A549 (cell line): ENCODE measurements at regions of chr5 and their contacts with region 1.

Region 1: GRCh38 chr5:172932313-172933017 is 26.8 kb upstream of the RPL26L1 start:
- DNase-seq: peak; percentile 76 to 86
- ATAC-seq: peak; percentile 66 to 81
- H3K4me3 ChIP-seq: no peak overlapping the region
- H3K27ac ChIP-seq: peak overlapping the region; percentile 98 to 100
- H3K4me1 ChIP-seq: peaks cover 47% of the 10 kb centered on the region
- CTCF ChIP-seq: peak; percentile 89
- EP300 ChIP-seq: no peak
- POLR2A ChIP-seq: no peak
- RAD21 ChIP-seq: peak; percentile 92 to 97

Region 2: DNA sequence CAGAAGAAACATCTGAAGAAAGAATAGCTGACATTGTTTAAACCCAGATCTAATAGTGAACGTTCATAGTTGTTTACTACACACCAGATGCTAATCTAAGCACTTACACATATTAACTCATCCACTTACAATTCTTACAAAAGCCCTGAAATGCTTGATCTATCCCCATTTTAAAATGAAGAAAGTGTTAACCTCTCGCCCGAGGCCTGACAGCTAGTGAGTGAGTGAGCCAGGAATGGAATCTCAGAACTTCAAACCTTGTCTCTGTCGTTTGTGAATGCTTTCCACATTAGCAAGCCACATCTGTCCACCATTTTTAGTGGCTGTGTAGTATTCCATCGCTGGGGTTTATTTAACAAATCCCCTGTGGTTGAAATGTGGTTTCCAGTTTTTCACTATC is 316.3 kb before region 1 on chr5:
- CTCF ChIA-PET with region 1: no interaction called
- POLR2A ChIA-PET with region 1: no interaction called
- DNase-seq: no peak
- ATAC-seq: no peak
- H3K4me3 ChIP-seq: no peak overlapping the region
- H3K27ac ChIP-seq: no peak overlapping the region
- H3K4me1 ChIP-seq: no peaks in the 10 kb centered on the region
- CTCF ChIP-seq: no peak
- EP300 ChIP-seq: no peak
- POLR2A ChIP-seq: no peak
- RAD21 ChIP-seq: no peak

Region 3: DNA sequence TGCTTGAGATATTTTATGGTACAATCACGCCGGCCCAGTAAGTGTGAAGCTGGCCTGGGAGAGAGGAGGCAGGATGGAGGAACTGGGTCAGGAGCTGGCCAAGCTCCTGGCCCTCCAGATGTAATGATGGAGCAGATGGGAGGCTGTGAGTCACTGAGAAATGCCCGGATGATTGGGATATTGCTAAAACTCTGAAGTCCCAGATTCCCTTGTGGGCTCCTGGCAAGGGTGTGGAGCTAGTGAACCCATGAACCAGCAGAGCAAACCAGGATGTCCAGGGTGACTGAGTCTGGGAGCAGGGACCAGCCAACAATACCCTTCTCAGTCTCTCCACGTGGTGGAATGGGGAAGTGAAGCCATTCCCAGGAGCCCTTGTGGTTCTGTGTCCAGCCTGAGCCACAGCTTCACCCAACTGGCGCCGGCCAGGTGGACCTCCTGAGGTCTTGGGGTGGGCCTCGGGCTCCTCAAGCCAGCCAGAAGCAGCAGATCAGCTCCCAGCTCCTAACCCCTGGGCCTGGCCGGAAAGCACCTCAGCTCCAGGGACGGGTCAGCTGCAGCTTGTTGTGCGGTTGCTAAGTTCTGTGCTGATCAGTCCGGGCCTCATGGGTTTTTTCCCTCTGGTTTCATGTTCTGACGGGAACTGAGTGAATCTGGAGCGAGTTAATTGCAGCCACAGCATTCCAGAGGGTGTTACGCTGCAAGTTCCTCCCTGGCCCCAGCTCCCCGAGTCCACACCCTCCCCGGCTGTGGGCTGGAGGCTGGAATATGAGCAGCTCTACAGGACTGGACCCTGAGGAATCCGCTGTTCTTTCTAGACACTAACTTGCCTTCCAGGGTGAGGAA is 199.1 kb before region 1 on chr5:
- CTCF ChIA-PET with region 1: interaction called, 14 read pairs
- POLR2A ChIA-PET with region 1: no interaction called
- DNase-seq: no peak
- ATAC-seq: peak; percentile 20 to 61; a peak in 4 of 6 replicates
- H3K4me3 ChIP-seq: no peak overlapping the region
- H3K27ac ChIP-seq: peak overlapping the region; percentile 45 to 78; a peak in 5 of 6 replicates
- H3K4me1 ChIP-seq: peaks cover 30% of the 10 kb centered on the region
- CTCF ChIP-seq: no peak
- EP300 ChIP-seq: no peak
- POLR2A ChIP-seq: no peak
- RAD21 ChIP-seq: no peak

Region 4: DNA sequence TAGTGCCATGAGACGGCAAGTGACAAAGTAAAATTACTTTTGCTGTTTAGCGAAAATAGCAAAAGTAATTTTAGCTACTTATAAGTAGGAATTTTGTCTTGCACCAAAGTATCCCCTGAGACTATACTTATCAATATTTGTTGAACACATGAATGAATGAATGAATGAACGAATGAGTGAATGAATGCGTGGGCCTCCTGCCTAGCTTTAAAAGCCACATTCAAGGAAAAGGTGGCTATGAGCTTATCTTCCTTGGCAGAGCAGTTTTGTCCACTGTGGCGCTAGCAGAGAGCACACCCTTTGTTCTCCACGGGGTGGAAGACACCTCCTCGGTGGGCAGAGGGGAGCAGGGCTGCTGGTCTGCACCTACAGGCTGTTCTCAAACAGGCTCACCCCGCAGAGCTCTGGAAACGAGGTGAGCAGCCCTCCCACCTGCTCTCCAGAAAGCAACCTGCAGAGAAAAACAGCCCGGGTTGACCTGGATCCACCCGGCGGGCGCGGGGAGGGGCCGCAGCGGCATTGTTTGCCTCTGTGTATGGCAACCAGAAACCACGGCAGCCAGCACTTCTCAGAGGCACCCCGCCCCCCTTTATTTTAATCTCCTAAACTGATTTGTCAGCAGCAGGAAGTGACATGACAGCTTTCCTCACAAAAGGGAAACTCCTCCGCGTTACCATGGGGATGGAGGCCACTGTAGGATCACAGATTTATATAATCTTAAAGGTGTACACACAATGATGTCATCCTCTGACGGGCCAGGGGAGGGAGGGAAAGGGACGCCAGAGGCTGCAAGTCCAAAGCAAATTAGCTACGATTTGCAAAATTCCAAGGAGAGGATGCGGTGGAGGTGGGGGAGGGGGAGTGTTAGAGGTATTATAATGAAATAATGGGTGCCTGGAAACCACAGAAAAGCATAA is 167.4 kb before region 1 on chr5:
- CTCF ChIA-PET with region 1: interaction called, 25 read pairs
- POLR2A ChIA-PET with region 1: interaction called, 47 read pairs
- DNase-seq: peak; percentile 98 to 100
- ATAC-seq: peak; percentile 60 to 64
- H3K4me3 ChIP-seq: peak overlapping the region; percentile 23
- H3K27ac ChIP-seq: peak overlapping the region; percentile 97 to 100
- H3K4me1 ChIP-seq: peaks cover 15% of the 10 kb centered on the region
- CTCF ChIP-seq: no peak
- EP300 ChIP-seq: peak in 1 of 2 experiments; percentile 73; a peak in 1 of 5 replicates
- POLR2A ChIP-seq: no peak
- RAD21 ChIP-seq: peak in 1 of 2 experiments; percentile 39; a peak in 2 of 5 replicates

Region 5: DNA sequence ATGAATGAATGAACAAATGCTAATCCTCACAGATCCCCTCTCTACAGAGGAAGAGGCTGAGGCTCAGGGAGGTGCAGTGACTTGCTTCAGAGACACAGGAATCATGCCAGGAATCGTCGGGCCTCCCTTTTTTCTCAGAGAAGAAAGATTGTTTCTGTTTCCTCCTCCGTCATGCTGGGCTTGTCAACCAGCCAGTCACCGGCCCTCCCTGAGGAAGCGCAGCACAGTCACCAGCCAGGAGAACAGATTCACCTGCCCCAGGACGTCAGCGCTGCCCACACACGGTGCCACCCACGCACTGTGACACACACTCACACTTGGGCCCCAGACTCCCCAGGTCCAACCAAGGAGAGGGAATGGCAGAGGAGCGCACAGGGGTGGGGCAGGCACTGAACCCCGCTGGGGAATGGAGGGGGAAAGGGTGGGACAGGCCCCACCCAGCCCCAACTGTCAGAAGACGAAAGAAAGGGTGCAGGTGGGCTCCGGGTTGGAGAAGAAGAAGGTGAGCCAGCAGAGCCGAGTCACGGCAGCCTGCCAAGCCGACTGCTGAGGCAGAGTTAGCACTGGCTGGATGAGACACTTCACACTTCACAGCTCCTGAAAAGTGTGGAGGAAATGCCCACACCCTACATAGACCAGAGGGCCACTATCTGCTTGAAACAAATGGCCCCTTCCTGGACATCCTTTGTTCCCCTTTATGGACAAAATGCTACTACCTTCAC is 112.3 kb before region 1 on chr5:
- CTCF ChIA-PET with region 1: no interaction called
- POLR2A ChIA-PET with region 1: no interaction called
- DNase-seq: no peak
- ATAC-seq: no peak
- H3K4me3 ChIP-seq: no peak overlapping the region
- H3K27ac ChIP-seq: peak overlapping the region in 1 of 2 experiments; percentile 56; a peak in 3 of 6 replicates
- H3K4me1 ChIP-seq: peaks cover 14% of the 10 kb centered on the region
- CTCF ChIP-seq: no peak
- EP300 ChIP-seq: no peak
- POLR2A ChIP-seq: no peak
- RAD21 ChIP-seq: no peak

Region 6: GRCh38 chr5:172910828-172911627 is 21.4 kb before region 1 on chr5:
- CTCF ChIA-PET with region 1: interaction called, 125 read pairs
- POLR2A ChIA-PET with region 1: interaction called, 12 read pairs
- DNase-seq: peak; percentile 67 to 96
- ATAC-seq: peak; percentile 85 to 91
- H3K4me3 ChIP-seq: no peak overlapping the region
- H3K27ac ChIP-seq: peak overlapping the region; percentile 98 to 100
- H3K4me1 ChIP-seq: peaks cover 68% of the 10 kb centered on the region
- CTCF ChIP-seq: peak; percentile 70
- EP300 ChIP-seq: peak; percentile 98 to 99
- POLR2A ChIP-seq: no peak
- RAD21 ChIP-seq: peak; percentile 82 to 87

Region 7: GRCh38 chr5:172943283-172943841 is 10.9 kb after region 1 on chr5:
- CTCF ChIA-PET with region 1: interaction called, 113 read pairs
- POLR2A ChIA-PET with region 1: no interaction called
- DNase-seq: no peak
- ATAC-seq: peak in 1 of 2 experiments; percentile 9; a peak in 1 of 6 replicates
- H3K4me3 ChIP-seq: no peak overlapping the region
- H3K27ac ChIP-seq: peak overlapping the region; percentile 16 to 70; a peak in 4 of 6 replicates
- H3K4me1 ChIP-seq: peaks cover 19% of the 10 kb centered on the region
- CTCF ChIP-seq: no peak
- EP300 ChIP-seq: no peak
- POLR2A ChIP-seq: no peak
- RAD21 ChIP-seq: no peak